PC-3 (cell line): ENCODE measurements at regions of chr1 and their contacts with region 1.

Region 1: GRCh38 chr1:40107290-40108262 is 10.5 kb upstream of the PPT1 start:
- DNase-seq: peak; percentile 96
- ATAC-seq: peak; percentile 92
- H3K4me3 ChIP-seq: peak overlapping the region; percentile 47; the same call in 1 of the 2 replicates
- H3K27ac ChIP-seq: peak overlapping the region; percentile 51
- H3K4me1 ChIP-seq: peaks cover 18% of the 10 kb centered on the region
- H3K27me3 ChIP-seq: no peaks in the 10 kb centered on the region
- CTCF ChIP-seq: no peak

Region 2: GRCh38 chr1:40040511-40041465 is 66.8 kb before region 1 on chr1 and contains the start of gene CAP1:
- CTCF ChIA-PET with region 1: no interaction called
- POLR2A ChIA-PET with region 1: interaction called, 11 read pairs
- intact Hi-C with region 1: no loop called
- DNase-seq: peak; percentile 99
- ATAC-seq: peak; percentile 90
- H3K4me3 ChIP-seq: peak within 1 kb of the TSS; percentile 99
- H3K27ac ChIP-seq: peak within 1 kb of the TSS; percentile 87
- H3K4me1 ChIP-seq: peaks cover 34% of the 10 kb centered on the region
- H3K27me3 ChIP-seq: no peaks in the 10 kb centered on the region
- CTCF ChIP-seq: no peak
- total RNA-seq, gene CAP1: 214 and 243 TPM in 2 replicates